Activated T-helper 2 cell treated with anti-CD3 and anti-CD28 coated beads, Interferon-gamma antibody, Interleukin-2, Interleukin-4, amounts not matched to agents 10 μg/mL and 5 μg/mL and 100 μg/mL, durations not matched to agents 14 hours and 24 hours and 36 hours (primary cell): ENCODE measurements at regions of chr4 and their contacts with region 1.

Region 1: DNA sequence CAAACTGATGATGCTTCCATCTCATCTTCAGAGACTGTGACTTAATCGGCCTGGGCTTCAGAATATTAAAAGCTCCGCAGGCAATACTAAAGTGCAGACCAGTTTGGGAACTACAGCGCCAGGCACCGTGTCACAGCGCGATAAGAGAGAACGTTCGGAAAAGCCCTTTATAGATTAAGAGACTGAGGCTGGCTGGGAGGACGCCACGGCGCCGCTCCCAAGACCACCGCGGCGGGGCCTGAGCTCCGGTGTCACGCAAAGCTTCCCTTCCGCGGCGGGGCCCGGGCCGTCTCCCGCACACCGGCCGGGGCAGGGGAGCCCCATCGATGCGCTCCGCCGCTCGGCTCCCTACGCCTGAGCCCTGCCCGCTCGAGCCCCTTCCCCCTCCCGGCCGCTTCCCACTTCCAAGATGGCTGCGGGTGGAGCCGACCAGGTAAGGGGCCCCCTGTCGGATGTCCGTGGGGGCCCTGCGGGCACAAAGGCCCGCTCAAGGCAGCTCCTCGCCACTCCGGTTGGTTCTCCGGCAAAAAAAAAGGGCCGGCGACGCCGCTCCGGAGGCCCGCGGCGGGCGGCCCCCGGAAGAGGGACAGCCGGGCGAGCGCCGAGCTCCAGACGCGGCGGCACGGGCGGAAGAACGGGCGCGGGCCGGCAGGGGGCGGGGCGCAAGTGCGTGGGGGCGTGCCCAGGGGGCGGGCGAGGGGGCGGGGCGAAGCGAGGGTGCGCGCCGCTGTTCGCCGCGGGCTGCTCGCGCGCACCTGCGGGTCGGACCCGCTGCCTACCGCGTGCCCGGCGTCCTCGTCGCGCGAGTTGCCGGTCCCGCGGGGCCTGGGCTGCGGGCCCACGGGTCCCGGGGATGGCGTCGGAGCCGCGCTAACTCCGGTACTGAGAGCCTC is at the start of gene TBC1D14:
- DNase-seq: peak; percentile 82
- H3K4me3 Mint-ChIP-seq: peak within 1 kb of the TSS; percentile 88
- H3K27ac Mint-ChIP-seq: peak within 1 kb of the TSS; percentile 87
- H3K4me1 Mint-ChIP-seq: peaks cover 31% of the 10 kb centered on the region
- H3K27me3 Mint-ChIP-seq: peaks cover 6% of the 10 kb centered on the region
- total RNA-seq, gene TBC1D14: 34.9 and 35.1 TPM in 2 replicates

Region 2: DNA sequence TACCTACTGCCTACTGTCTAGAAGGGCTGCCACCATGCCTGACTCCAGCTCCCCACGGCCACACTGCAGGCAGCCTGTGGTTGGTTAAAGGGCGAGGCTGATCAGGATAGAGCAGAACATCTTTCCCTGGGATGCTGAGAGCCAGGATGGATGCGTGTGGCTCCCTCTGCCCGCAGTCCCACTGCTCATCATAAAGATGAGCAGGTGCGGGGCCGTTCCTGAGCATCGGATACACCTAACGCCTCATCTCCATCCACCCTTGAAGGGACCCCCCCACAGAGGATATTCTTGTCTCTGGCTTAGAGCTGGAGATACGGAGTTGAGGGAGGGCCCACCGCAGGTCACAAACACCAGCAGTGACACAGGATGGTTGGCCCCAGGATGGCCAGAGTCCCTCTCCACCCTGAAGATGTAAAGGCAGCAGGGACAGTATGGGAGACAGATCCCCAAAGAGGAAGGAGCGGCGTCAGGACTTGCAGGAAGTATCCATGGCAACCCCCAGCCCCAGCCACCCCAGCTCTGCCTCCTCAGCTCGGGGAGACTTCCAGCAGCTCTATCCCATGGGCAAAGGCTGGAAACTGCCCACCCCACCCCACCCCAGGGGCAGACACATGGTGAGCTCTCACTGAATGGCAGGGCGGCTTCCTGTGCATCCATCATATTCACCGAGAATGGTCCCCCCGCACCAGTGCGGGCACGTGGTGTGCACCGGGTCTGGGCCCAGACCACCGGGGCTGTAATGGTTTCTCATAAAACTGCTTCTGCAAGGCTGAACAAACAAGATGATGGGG is 456.2 kb before region 1 on chr4:
- intact Hi-C with region 1: no loop called
- DNase-seq: no peak
- H3K4me3 Mint-ChIP-seq: no peak overlapping the region
- H3K27ac Mint-ChIP-seq: no peak overlapping the region
- H3K4me1 Mint-ChIP-seq: no peaks in the 10 kb centered on the region
- H3K27me3 Mint-ChIP-seq: no peaks in the 10 kb centered on the region

Region 3: DNA sequence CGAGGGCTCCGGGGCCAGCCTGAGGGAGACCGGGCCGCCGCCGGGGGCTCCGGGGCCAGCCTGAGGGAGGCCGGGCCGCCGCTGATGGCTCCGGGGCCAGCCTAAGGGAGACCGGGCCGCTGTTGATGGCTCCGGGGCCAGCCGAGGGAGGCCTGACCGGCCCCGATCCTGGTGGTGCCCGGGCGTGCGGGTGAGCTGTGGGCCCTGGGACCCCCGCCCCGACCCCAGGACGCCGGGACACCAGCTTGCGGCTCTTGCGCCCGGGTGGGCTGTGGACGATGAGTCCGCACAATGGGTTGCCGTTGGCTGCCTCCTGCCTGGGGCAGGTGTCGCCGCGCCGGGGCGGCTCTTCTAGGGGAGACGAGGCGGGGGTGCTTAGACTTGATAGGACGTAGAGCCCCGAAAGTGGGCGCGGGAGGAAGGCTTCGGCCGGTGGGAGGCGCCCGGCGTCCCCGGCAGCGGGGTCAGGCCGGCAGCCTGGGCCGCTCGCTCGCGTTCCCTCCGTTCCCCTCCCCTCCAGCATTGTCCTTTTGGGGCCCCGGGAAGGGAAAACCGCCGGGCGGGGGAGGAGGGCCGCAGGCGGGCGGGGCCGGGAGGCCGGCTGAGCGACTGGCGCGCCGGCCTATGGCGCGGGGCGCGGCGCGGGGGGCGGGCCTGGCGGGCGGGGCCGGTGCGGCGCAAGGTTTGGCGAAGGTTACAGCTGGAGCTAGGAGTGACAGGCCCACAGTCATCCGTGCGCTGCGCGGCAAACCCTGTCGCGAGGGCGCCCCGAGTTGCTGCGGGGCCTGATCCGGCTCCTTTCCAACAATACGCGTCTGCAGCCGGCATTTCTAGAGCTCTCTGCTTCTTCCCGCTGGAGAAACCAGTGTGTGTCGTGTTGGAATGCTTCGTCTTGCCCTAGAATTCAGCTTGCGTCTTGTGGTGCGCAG is 126.0 kb before region 1 on chr4:
- intact Hi-C with region 1: loop called (anchors 2 kb)
- DNase-seq: peak; percentile 86
- H3K4me3 Mint-ChIP-seq: peak overlapping the region; percentile 79
- H3K27ac Mint-ChIP-seq: peak overlapping the region; percentile 75
- H3K4me1 Mint-ChIP-seq: peaks cover 55% of the 10 kb centered on the region
- H3K27me3 Mint-ChIP-seq: no peaks in the 10 kb centered on the region

Region 4: DNA sequence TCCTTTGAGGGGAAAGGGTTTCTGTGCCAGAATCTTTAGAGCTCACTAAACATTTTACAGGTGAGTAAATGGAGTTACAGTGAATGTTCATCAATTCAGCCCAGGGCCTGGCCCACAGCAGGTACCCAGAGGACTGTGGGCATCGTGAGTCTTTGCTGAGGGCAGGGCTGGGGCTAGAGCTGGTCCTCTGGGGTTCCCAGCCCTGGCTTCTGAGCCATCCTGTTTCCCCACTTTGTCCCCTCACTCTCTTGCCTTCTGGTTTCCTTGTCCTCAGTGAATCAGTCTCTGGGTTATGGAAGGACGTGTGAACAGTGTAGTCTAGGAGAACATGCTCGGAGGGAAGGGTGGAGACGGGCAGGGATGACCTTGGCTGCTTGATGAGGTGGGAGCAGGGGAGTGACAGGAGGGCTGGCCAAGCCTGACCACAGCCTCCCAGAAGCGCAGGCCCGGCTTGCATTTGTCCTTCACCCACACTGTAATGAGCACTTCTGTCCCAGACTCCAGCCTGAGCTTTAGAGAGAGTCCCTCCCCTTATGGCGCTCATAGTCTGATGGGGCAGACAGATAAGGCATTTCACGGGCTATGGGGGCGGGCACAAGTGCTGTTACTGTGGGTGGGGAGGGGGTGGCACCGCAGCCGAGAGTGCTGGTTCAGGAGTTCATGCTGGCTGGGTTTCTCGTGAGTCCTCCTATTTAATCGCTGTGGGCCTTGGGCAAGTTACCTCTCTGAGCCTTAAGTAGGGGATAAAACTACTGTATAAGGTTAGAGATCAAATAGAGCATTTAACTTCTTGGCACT is 17.6 kb after region 1 on chr4:
- intact Hi-C with region 1: loop called (anchors 1 kb)
- DNase-seq: peak; percentile 48
- H3K4me3 Mint-ChIP-seq: peak overlapping the region; percentile 62
- H3K27ac Mint-ChIP-seq: peak overlapping the region; percentile 36
- H3K4me1 Mint-ChIP-seq: peaks cover 39% of the 10 kb centered on the region
- H3K27me3 Mint-ChIP-seq: no peaks in the 10 kb centered on the region

Region 5: GRCh38 chr4:7042697-7043464 is 133.6 kb after region 1 on chr4 and contains the start of gene TADA2B:
- intact Hi-C with region 1: loop called (anchors 2 kb)
- DNase-seq: peak; percentile 94
- H3K4me3 Mint-ChIP-seq: peak within 1 kb of the TSS; percentile 86
- H3K27ac Mint-ChIP-seq: peak within 1 kb of the TSS; percentile 65
- H3K4me1 Mint-ChIP-seq: peaks cover 38% of the 10 kb centered on the region
- H3K27me3 Mint-ChIP-seq: peaks cover 7% of the 10 kb centered on the region
- total RNA-seq, gene TADA2B: 12.9 and 13.3 TPM in 2 replicates